ENCODE measurements at regions of chr1 and their contacts with region 1.

Region 1: GRCh38 chr1:24150234-24151174 is 7.6 kb upstream of the IL22RA1 start:
- DNase-seq: peak; percentile 86
- H3K4me3 ChIP-seq: peak overlapping the region; percentile 25 to 42; a peak in 3 of 4 replicates
- H3K27ac ChIP-seq: no peak overlapping the region
- H3K4me1 ChIP-seq: peaks cover 0 to 4% of the 10 kb centered on the region in 2 experiments; a peak in 1 of 4 replicates
- H3K27me3 ChIP-seq: no peaks in the 10 kb centered on the region; the same call in 1 of the 2 replicates
- CTCF ChIP-seq: peak; percentile 78
- EP300 ChIP-seq: no peak
- RAD21 ChIP-seq: peak; percentile 62

Region 2: DNA sequence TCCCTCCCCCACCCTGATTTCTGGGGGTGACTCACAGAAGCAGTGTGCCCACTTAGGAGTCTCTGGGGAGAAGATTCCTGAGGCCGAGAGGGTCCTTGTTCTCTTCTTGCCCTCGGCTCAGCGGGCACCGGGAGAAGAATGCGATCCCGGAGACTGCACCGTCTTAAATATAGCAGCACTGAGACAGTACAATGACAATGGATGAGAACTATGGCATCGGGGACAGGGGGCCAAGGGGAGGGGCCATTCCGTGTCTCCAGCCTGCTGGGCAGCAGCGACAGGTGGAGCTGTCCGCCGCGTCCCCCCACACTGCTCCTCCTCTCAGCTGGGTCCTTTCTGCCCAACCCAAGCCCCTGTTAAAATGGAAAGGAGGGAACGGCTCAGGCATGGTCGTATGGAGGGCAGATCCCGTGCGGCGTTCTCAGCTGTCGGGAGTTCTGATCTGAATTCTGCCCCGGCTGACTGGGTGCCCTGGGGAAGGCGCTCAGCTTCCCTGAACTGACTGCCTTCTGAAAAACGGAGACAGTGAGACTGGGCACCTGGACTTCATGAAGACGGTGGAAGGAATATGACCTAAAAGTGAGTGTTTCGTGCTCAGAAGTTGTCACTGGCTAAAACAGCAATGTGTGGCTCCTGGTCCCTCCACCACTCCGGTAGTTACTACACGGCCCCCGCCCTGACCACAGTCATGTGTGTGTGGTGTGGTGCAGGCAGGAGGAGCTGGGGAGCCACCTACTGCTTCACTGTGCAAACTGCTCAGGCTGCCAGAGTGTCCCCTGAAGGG is 38.3 kb before region 1 on chr1 and contains the start of gene MYOM3:
- CTCF ChIA-PET with region 1: interaction called, 16 read pairs
- POLR2A ChIA-PET with region 1: no interaction called
- DNase-seq: peak; percentile 47
- H3K4me3 ChIP-seq: no peak within 1 kb of the TSS; a peak in 1 of 4 replicates
- H3K27ac ChIP-seq: peak within 1 kb of the TSS in 1 of 2 experiments; percentile 94; a peak in 2 of 4 replicates
- H3K4me1 ChIP-seq: peaks cover 10 to 40% of the 10 kb centered on the region in 2 experiments; a peak in 2 of 4 replicates
- H3K27me3 ChIP-seq: no peaks in the 10 kb centered on the region; the same call in 1 of the 2 replicates
- CTCF ChIP-seq: peak; percentile 40
- EP300 ChIP-seq: no peak
- RAD21 ChIP-seq: peak; percentile 67
- polyA plus RNA-seq, gene MYOM3: 0.02 and 0.05 TPM in 2 replicates

Region 3: GRCh38 chr1:24137031-24137430 is 13.5 kb before region 1 on chr1:
- CTCF ChIA-PET with region 1: interaction called, 32 read pairs
- POLR2A ChIA-PET with region 1: no interaction called
- DNase-seq: no peak
- H3K4me3 ChIP-seq: no peak overlapping the region
- H3K27ac ChIP-seq: no peak overlapping the region
- H3K4me1 ChIP-seq: no peaks in the 10 kb centered on the region
- H3K27me3 ChIP-seq: no peaks in the 10 kb centered on the region; the same call in 1 of the 2 replicates
- CTCF ChIP-seq: no peak
- EP300 ChIP-seq: no peak
- RAD21 ChIP-seq: no peak

Region 4: GRCh38 chr1:24179251-24179840 is 28.8 kb after region 1 on chr1:
- CTCF ChIA-PET with region 1: interaction called, 11 read pairs
- POLR2A ChIA-PET with region 1: no interaction called
- DNase-seq: no peak
- H3K4me3 ChIP-seq: no peak overlapping the region
- H3K27ac ChIP-seq: no peak overlapping the region
- H3K4me1 ChIP-seq: no peaks in the 10 kb centered on the region
- H3K27me3 ChIP-seq: no peaks in the 10 kb centered on the region
- CTCF ChIP-seq: no peak
- EP300 ChIP-seq: no peak
- RAD21 ChIP-seq: no peak

Region 5: GRCh38 chr1:24186993-24187805 is 36.7 kb after region 1 on chr1 and contains the start of gene IFNLR1:
- CTCF ChIA-PET with region 1: interaction called, 15 read pairs
- POLR2A ChIA-PET with region 1: no interaction called
- DNase-seq: peak; percentile 89
- H3K4me3 ChIP-seq: peak within 1 kb of the TSS; percentile 49 to 58
- H3K27ac ChIP-seq: no peak within 1 kb of the TSS
- H3K4me1 ChIP-seq: peaks cover 0 to 5% of the 10 kb centered on the region in 2 experiments; a peak in 1 of 4 replicates
- H3K27me3 ChIP-seq: peaks cover 4% of the 10 kb centered on the region; the same call in 1 of the 2 replicates
- CTCF ChIP-seq: no peak
- EP300 ChIP-seq: no peak
- RAD21 ChIP-seq: no peak
- polyA plus RNA-seq, gene IFNLR1: 0.29 and 0.30 TPM in 2 replicates

Region 6: GRCh38 chr1:24275510-24275909 is 125.0 kb after region 1 on chr1:
- CTCF ChIA-PET with region 1: no interaction called
- POLR2A ChIA-PET with region 1: no interaction called
- DNase-seq: no peak
- H3K4me3 ChIP-seq: no peak overlapping the region
- H3K27ac ChIP-seq: no peak overlapping the region
- H3K4me1 ChIP-seq: peaks cover 0 to 6% of the 10 kb centered on the region in 2 experiments; a peak in 1 of 4 replicates
- H3K27me3 ChIP-seq: no peaks in the 10 kb centered on the region; the same call in 1 of the 2 replicates
- CTCF ChIP-seq: no peak
- EP300 ChIP-seq: no peak
- RAD21 ChIP-seq: no peak

Measured in SK-N-SH (cell line).